Activated CD4-positive, alpha-beta memory T cell treated with anti-CD3 and anti-CD28 coated beads, Interleukin-2, amount 10 ng/mL, durations not matched to agents 7 days and 5 days (primary cell): ENCODE measurements at regions of chr3 and their contacts with region 1.

Region 1: DNA sequence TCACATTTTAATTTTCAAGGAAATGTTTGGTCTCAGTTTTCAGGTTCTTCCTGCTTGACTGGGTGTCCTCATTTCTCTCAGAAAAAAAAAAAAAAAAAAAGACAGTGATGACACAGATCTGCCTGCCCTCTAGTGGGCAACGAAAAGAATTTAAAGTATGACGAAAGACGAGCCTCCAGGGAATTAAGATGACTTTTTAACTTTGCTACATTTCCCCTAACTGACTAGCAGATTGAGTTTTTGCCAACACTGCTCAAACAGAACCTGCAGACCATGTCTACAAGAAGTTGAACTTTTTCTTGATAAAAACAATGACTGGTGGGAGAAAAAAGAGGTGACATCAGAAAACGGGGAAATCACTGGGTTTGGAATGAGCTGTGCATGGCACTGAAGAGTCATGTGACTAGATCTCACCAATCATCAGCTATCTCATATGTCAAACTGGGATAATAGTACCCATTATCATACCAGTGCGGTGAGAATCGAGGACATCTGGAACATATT is 40.8 kb downstream of the EOMES start:
- DNase-seq: peak; percentile 39
- H3K4me3 Mint-ChIP-seq: peak overlapping the region; percentile 44
- H3K27ac Mint-ChIP-seq: peak overlapping the region; percentile 33
- H3K4me1 Mint-ChIP-seq: peaks cover 18% of the 10 kb centered on the region
- H3K27me3 Mint-ChIP-seq: no peaks in the 10 kb centered on the region

Region 2: DNA sequence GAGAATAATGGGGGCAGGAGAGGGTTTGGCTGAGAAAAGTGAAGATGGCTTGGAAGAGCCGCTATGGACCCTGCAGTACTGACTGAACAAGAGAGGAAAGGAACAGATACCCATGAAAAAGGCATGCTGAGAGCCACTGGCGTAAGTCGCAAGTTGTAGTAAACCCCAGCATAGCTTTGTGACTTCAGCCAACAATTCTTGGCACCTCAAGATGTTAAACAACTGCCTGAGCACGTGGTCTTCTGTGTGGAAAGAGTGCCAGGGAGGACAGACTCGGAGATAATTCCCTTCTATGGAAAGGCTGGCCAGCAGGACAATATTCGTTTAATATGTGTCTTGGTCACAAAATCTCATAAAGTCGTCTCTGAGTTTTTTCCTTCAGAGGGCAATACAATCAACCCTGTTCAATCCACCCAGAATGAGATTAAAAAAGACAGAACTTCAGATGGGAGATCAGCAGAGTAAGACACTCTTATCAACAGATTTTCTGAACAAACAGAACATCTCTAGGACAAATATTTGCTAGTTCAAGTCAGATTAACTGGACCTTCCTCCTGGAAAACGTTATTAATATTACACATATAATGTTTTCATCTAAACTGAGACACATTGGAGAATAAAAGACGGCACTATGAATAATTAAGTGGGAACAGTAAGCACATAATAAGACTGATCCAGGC is 361.3 kb before region 1 on chr3:
- CTCF ChIA-PET with region 1: interaction called, 17 read pairs
- POLR2A ChIA-PET with region 1: no interaction called
- DNase-seq: no peak
- H3K4me3 Mint-ChIP-seq: no peak overlapping the region
- H3K27ac Mint-ChIP-seq: no peak overlapping the region
- H3K4me1 Mint-ChIP-seq: peaks cover 3% of the 10 kb centered on the region
- H3K27me3 Mint-ChIP-seq: no peaks in the 10 kb centered on the region

Region 3: DNA sequence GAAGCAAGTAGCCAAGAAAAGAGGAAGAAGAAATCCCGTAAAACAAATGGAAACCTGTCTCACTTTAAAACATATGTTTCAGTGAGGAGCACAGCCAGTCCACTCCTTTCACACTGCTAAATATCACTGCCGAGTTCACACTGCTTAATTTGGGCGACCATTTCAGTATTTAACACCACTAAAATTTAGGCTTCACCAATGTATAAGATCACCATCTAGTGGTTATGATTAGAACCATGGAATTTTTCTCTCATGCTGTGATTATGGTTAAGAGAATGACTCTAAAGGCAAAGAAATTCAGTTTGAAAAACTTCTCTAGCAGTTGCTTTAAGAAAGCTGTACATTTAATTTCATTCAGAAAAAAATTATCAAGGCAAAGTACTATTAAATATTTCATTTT is 213.8 kb before region 1 on chr3:
- CTCF ChIA-PET with region 1: interaction called, 22 read pairs
- POLR2A ChIA-PET with region 1: no interaction called
- DNase-seq: no peak
- H3K4me3 Mint-ChIP-seq: no peak overlapping the region
- H3K27ac Mint-ChIP-seq: no peak overlapping the region
- H3K4me1 Mint-ChIP-seq: peaks cover 17% of the 10 kb centered on the region
- H3K27me3 Mint-ChIP-seq: no peaks in the 10 kb centered on the region

Region 4: DNA sequence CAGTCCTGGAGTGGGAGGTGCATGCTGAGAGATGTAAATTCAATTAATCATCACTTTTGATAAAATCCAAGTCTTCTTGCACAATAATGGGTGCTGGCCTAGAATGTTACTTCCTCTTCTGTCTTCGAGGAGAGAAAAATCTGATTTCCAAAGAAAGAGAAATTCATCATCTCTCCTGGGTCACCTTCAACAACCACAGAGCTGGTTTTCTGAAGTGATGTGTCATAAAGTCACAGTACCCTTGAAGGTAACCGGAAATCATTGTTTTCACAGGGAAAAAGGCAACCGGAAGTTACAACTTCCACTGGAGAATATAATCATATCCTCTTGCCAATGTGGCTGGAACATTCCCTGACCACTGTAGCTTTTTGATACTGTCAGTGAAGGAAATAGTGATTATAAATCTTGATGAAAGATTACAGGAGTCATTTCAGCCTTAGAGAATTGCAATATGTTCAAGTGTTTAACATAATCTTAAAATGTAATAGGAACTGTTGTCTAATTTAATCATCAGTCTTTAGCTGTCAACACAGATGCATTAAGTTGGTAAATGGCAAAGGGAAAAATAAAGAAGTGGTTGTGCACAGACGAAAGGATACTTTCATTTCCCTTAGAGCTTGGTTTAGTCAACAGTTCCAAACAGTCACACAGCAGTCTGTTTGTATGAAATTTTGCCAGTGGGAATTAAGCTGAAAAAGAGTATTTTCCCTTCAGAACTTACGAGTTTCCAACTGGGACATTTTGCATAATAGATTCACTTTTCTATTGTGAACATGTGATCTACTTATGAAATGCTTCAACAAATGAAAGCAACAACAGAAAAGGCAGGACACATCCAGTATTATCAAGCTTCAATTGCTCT is 90.6 kb before region 1 on chr3:
- CTCF ChIA-PET with region 1: interaction called, 10 read pairs
- POLR2A ChIA-PET with region 1: no interaction called
- DNase-seq: no peak
- H3K4me3 Mint-ChIP-seq: no peak overlapping the region
- H3K27ac Mint-ChIP-seq: peak overlapping the region; percentile 86
- H3K4me1 Mint-ChIP-seq: peaks cover 38% of the 10 kb centered on the region
- H3K27me3 Mint-ChIP-seq: no peaks in the 10 kb centered on the region

Region 5: GRCh38 chr3:27666708-27667107 is 14.6 kb before region 1 on chr3:
- CTCF ChIA-PET with region 1: interaction called, 23 read pairs
- POLR2A ChIA-PET with region 1: interaction called, 3 read pairs
- DNase-seq: peak; percentile 32
- H3K4me3 Mint-ChIP-seq: no peak overlapping the region
- H3K27ac Mint-ChIP-seq: peak overlapping the region; percentile 37
- H3K4me1 Mint-ChIP-seq: peaks cover 28% of the 10 kb centered on the region
- H3K27me3 Mint-ChIP-seq: no peaks in the 10 kb centered on the region

Region 6: GRCh38 chr3:27737091-27737490 is 55.8 kb after region 1 on chr3:
- CTCF ChIA-PET with region 1: no interaction called
- POLR2A ChIA-PET with region 1: no interaction called
- DNase-seq: no peak
- H3K4me3 Mint-ChIP-seq: no peak overlapping the region
- H3K27ac Mint-ChIP-seq: no peak overlapping the region
- H3K4me1 Mint-ChIP-seq: no peaks in the 10 kb centered on the region
- H3K27me3 Mint-ChIP-seq: peaks cover 11% of the 10 kb centered on the region

Region 7: GRCh38 chr3:27910456-27910855 is 229.2 kb after region 1 on chr3:
- CTCF ChIA-PET with region 1: no interaction called
- POLR2A ChIA-PET with region 1: no interaction called
- DNase-seq: no peak
- H3K4me3 Mint-ChIP-seq: no peak overlapping the region
- H3K27ac Mint-ChIP-seq: no peak overlapping the region
- H3K4me1 Mint-ChIP-seq: peaks cover 3% of the 10 kb centered on the region
- H3K27me3 Mint-ChIP-seq: no peaks in the 10 kb centered on the region